Posterior vena cava (tissue), 2 donors: ENCODE measurements at regions of chr22 and their contacts with region 1.

Region 1: GRCh38 chr22:50257451-50258360 is 3.8 kb downstream of the MAPK12 start:
- DNase-seq: no peak

Region 2: DNA sequence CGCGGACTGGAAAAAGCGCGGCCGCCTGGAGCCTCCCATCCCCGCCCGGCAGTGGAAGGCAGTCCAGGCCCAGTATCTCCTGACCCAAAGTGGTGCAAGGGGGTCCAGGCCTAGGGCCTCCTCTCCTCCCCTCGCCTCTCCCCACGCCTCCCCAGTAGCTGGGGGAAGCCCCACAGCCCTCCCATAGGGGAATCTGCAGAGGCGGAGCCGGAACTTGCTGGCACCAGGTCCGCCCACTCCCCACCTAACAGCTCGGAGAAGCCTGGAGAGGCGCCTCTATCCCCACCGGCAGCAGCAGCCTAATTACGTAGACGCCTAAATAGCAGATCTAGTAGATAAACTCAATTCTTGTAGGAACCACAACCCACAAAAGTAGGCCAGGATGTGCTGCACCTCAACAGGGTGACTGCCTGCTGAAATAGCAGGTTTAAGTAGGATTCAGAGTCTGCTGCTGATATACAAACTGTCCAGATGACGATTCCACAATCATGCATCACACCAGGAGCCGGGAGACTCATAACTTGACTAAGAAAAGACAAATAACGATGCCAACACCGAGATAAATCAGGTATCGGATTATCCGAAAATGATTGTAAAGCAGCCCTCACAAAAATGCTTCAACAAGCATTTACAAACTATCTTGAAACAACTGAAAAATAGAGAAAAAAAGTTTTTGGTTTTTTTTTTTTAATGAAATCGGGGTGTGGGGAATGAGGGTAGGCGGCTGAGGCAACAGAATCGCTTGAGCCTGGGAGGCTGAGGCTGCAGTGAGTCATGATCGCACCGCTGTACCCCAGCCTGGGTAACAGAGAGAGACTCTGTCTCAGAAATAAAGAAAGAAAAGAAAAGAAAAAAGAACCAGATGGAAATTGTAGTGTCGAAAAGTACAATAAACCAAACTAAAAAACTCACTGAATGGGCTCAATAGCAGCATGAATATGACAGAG is 418.7 kb before region 1 on chr22:
- intact Hi-C with region 1: no loop called
- DNase-seq: no peak

Region 3: DNA sequence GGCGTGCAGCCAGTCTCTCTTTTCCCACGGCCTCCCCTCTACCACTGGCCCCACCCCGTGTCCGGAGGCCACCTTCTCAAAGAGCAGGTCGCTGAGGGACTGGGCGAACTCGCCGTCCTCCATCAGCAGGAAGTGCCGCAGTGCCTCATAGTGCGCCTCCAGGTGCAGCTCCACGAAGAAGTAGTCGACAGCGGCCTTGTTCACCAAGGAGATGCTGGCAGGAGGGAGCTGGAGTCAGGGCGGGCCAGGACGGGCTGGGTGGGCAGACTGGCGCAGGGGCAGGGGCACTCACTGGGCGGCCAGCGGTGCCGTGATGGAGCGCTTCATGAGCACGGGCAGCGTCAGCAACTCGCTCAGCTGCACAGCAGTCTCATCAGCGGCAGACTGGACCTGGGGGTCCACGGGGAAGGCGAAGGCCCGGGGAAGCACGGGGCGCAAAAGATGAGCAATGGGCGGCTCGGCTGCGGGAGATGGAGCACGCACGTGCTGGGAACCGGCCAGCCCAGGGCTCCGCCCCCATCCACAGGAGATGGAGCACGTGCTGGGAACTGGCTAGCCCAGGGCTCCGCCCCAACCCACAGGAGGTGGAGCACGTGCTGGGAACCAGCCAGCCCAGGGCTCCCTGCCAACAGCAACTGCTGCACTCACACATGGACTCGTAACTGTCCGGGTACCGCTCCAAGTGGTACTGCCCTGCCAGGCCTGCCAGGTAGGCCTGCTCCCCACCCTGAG is 38.5 kb before region 1 on chr22:
- intact Hi-C with region 1: no loop called
- DNase-seq: peak; percentile 91

Region 4: DNA sequence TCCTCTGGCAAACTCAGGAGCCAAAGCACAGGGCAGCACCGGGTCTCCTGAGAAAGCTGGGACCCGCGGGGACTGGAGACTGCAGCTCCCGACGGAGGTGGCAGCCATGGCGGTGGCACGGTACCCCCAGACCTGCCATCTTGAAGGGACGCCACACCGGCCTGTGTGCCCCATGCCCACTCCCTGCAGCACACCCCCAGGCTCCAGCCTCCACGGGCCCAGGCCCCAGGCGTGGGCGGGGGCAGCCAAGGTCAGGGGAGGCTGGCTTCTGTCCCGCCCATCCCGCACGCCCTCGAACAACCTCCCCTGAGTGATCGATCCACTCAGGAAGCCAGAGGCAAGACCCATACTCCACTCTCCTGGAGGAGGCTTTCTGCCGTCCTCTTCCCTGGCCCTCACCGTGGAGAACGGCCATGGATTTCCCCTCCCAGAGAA is 39.4 kb after region 1 on chr22:
- intact Hi-C with region 1: loop called in 1 of 2 experiments (anchors 1 kb)
- DNase-seq: no peak

Region 5: DNA sequence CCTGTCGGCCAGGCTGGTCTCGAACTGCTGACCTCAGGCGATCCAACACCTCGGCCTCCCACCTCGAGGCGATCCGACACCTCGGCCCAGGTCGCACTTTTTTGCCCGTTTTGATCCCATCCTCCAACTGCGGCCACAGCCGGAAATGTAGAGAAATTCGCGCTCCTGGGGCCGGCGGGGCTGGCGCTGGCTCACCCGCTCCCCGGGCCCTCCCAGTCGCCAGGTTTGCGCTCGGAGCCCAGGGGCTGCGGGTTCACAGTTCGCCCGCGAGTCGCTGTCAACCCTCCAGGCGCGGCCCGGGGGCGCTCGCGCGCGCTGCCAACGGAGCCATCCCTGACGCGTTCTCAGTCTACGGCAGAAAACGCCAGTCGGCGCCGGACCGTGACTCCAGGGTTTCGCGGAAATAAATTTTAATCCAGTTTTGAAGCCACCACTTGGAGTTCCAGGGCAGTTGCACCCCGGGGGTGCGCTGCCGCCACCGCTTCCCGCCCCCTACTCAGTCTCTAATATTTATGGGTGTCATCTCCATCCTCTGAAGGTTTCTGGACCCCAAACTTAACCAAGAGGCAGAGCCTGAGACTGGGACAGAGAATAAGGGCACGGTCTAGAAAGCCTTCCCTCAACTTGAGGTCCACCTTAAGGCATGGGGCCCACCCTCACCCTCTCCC is 286.5 kb after region 1 on chr22:
- intact Hi-C with region 1: no loop called
- DNase-seq: peak; percentile 93